Activated CD4-positive, alpha-beta memory T cell treated with anti-CD3 and anti-CD28 coated beads for 36 hours (primary cell): ENCODE measurements at regions of chr6 and their contacts with region 1.

Region 1: DNA sequence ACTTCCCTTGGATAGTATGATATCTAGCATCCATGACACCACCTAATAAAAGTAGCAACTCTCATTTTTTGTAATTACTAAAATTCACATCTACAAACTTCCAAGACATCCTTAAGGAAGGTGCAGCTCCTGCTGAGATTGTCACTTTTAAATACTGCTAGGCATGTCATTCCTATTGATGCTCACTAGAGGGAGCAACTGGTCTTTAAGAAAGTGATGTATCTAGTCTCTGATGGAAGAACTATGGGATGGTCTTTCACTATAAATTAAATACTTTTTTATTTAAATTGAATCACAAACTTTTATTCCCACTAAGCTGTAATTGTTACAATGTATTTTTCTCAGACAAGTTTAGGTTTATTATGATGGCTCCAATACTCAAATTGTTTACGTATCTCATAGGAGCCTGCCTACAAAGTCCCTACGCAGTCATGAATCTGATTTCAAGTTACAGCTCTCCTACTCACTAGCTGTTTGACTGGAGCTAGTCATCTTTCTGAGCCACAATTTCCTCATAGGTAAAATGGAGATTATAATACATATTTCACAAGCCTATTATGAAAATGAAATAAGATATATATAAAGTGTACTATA is 8.1 kb upstream of the TSPYL1 start:
- DNase-seq: no peak
- H3K4me3 Mint-ChIP-seq: no peak overlapping the region
- H3K27ac Mint-ChIP-seq: no peak overlapping the region
- H3K4me1 Mint-ChIP-seq: no peaks in the 10 kb centered on the region
- H3K27me3 Mint-ChIP-seq: no peaks in the 10 kb centered on the region

Region 2: GRCh38 chr6:116298973-116299372 is 11.2 kb after region 1 on chr6:
- CTCF ChIA-PET with region 1: interaction called, 15 read pairs
- POLR2A ChIA-PET with region 1: no interaction called
- intact Hi-C with region 1: no loop called
- DNase-seq: no peak
- H3K4me3 Mint-ChIP-seq: no peak overlapping the region
- H3K27ac Mint-ChIP-seq: no peak overlapping the region
- H3K4me1 Mint-ChIP-seq: no peaks in the 10 kb centered on the region
- H3K27me3 Mint-ChIP-seq: no peaks in the 10 kb centered on the region

Region 3: DNA sequence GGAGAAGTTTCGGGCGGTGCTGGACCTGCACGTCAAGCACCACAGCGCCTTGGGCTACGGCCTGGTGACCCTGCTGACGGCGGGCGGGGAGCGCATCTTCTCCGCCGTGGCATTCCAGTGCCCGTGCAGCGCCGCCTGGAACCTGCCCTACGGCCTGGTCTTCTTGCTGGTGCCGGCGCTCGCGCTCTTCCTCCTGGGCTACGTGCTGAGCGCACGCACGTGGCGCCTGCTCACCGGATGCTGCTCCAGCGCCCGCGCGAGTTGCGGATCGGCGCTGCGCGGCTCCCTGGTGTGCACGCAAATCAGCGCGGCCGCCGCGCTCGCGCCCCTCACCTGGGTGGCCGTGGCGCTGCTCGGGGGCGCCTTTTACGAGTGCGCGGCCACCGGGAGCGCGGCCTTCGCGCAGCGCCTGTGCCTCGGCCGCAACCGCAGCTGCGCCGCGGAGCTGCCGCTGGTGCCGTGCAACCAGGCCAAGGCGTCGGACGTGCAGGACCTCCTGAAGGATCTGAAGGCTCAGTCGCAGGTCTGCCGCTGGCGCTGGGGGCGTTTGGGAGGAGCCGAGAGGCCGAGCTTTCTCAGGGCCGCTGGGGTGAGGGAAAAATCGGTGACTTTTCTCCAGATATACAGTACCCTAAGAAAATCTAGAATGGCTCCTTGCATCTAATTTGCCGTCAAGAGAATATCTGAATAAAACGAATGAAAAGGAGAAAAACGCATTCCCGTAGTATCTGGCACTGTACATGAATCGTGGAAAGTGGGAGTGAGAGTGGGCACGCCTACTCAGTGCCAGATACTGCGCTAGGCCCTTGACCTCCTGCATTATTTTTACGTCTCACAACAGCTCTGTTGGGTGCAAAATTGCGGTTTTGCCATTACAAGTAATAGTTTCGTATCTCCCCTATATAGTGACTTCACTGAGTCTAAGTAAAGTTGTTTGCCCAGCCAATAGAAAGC is 174.4 kb after region 1 on chr6:
- CTCF ChIA-PET with region 1: interaction called, 3 read pairs
- POLR2A ChIA-PET with region 1: no interaction called
- intact Hi-C with region 1: loop called (anchors 5 kb)
- DNase-seq: peak; percentile 62
- H3K4me3 Mint-ChIP-seq: peak overlapping the region; percentile 60
- H3K27ac Mint-ChIP-seq: no peak overlapping the region
- H3K4me1 Mint-ChIP-seq: peaks cover 22% of the 10 kb centered on the region
- H3K27me3 Mint-ChIP-seq: peaks cover 32% of the 10 kb centered on the region